ENCODE measurements at regions of chr2 and their contacts with region 1.

Region 1: DNA sequence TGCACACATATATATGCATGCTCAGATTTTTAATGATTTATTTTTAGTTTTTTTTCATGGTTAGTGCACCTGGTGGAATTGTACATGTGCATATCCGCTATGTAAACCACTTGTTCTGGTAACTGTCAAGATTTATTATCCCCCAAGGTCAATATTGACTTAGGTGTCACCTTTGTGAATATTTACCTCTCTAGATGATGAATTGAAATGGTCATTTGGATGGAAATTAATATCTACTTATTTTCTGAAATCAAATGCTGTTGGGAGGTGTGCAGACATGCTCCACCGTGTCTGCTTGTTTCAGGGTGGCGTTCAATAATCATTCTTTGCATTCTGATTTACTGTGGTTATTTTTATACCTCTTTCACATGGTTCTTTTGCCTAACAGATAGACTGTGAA is 14.8 kb downstream of the CNTNAP5 start:
- DNase-seq: no peak
- H3K4me3 ChIP-seq: no peak overlapping the region
- H3K27ac ChIP-seq: no peak overlapping the region
- H3K4me1 ChIP-seq: no peaks in the 10 kb centered on the region
- H3K27me3 ChIP-seq: no peaks in the 10 kb centered on the region
- CTCF ChIP-seq: no peak
- POLR2A ChIP-seq: no peak

Region 2: DNA sequence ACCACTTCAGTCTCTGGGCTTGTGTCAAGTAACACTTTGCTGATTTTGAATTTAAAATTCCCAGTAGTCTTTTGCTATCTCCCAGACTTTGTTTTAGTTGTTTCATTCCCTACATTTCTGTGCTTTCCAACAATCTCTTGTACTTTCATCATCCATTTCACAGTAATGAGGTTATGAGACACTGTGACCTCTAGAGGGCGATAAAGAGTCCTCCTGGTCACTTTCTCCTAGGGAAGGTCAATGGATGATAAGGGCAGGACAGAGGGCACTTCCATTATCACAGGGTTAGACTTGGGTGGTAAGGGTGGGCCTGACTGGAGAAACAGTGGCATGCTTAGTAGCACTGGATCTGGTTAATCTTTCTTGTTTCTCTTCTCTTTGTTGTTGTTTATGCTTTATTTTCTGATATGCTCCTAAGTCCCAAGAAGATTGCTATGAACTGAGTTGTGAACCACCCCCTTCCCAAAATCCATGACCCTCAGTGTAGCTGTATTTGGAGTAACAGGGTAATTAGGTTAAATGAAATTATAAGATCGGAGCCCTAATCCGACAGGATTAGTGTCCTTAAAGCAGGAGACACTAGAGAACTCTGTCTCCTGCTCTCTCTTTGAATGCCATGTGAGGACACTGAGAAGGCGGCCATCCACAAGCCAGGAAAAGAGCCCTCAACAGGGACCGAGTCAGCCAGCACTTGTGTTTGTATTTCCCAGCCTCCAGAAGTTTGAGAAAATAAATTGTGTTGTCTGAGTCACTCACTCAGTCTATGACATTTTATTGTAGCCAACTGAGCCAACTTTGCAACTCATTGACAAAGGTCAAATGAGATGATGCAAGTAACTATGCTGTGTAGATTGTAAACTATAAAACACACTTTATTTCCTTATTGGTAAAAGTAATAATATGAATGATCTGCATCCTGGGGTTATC is 764.4 kb after region 1 on chr2:
- intact Hi-C with region 1: loop called (anchors 10 kb)
- DNase-seq: no peak
- H3K4me3 ChIP-seq: no peak overlapping the region
- H3K27ac ChIP-seq: no peak overlapping the region
- H3K4me1 ChIP-seq: no peaks in the 10 kb centered on the region
- H3K27me3 ChIP-seq: no peaks in the 10 kb centered on the region
- CTCF ChIP-seq: peak in 7 of 11 experiments; percentile 24 to 60 (median 38)
- POLR2A ChIP-seq: no peak

Measured in spleen (tissue), 13 donors.